ENCODE measurements at regions of chr5 and their contacts with region 1.

Region 1: DNA sequence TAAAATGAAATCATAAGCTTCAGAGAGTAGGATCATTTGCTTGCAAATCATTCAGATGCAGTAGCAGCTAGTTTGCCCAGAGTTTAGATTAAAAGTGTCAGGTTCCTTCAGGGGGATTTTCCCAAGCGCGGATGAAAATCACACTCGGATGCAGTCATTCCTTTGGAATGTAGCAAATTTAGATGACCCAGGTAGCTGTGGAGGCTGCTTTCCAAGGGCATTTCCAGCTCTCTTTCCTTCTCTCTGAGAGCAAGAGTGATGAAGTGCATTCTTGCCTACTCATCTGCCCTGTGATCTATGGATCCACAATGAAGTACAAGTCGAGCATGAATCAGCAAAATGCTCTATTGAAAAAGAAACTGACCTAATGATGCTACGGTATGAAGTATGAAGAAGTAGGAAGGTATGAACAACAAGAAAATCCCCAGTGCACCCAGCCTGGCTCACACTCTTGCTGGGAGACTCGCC is 200.2 kb downstream of the PLK2 start:
- DNase-seq: peak; percentile 85 to 100
- H3K4me3 ChIP-seq: peak overlapping the region; percentile 44; the same call in 1 of the 2 replicates
- H3K27ac ChIP-seq: peak overlapping the region; percentile 98
- H3K4me1 ChIP-seq: peaks cover 42% of the 10 kb centered on the region
- H3K27me3 ChIP-seq: no peaks in the 10 kb centered on the region
- CTCF ChIP-seq: no peak

Region 2: DNA sequence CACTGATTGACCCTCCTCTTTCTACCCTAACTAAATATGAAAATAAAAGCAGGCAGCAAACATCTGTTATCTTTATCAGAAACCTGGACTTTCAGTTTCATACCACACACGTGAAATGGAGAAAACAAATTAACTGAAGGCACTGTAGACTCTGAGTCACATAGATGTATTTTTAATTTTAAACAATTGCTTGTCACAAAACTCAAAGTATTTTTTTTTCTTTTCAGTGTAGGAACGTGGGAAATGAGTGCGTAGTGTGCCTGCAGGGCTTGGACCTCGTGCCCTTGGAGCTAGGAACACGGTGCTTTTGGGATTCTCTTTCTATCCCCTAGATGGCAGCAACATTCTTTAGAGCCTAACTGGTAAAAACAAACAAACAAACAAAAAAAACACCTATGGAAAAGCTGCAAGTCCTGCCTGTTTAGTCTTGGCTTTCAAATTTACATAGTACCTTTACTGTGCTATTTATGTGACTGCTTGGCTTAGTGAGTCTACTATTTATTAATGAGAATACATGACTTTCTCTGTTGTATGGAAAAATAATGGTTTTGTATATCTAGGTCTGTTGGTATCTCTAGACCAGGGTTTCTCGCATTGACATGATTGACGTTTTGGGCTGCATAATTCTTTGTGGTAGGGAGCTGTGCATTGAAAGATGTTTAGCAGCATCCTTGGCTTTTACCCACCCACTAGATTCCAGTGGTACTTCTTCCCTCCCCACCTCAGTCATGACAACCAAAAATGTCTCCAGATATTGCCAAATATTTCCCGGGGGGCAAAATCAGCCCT is 760.3 kb before region 1 on chr5:
- CTCF ChIA-PET with region 1: interaction called, 4 read pairs
- POLR2A ChIA-PET with region 1: interaction called, 5 read pairs
- intact Hi-C with region 1: loop called (anchors 5 kb)
- DNase-seq: peak; percentile 50 to 84
- H3K4me3 ChIP-seq: peak overlapping the region; percentile 18; the same call in 1 of the 2 replicates
- H3K27ac ChIP-seq: peak overlapping the region; percentile 74
- H3K4me1 ChIP-seq: peaks cover 34% of the 10 kb centered on the region
- H3K27me3 ChIP-seq: no peaks in the 10 kb centered on the region
- CTCF ChIP-seq: peak; percentile 84

Region 3: DNA sequence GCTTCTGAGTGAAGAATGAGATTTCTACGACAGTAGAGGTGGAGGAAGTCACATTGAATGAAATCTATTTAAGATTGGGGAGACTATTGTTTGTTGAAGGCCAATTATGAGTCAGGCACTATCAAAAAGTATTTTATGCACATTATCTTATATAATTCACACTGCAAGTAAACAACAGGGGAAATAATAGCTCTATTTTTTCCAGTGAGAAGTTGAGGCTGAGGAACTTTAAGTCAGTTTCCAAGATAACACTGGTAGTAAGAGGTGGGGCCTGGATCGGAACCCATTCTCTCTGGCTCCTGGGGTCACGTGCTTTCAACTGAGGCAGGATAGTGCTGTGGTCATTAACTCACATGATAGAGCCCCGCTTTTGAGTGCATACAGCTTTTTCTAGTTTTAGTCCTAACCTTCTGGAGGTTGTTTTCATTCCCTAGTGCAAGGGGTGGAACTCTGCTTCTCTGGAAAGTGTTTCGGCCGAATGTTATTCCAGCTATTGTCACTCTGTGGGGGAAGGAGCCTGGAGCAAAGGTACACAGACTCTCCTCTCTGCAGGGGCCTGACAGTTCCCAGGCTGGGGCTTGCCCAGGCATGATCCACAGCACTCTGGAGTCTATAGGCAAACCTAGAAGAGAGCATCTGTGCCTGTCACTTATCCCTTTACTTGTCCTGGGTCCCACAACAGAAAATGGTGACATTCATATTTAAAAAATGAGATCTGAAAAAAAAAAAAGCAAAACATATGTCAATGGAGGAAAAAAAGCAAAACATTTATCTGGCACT is 424.7 kb before region 1 on chr5:
- CTCF ChIA-PET with region 1: no interaction called
- POLR2A ChIA-PET with region 1: interaction called, 4 read pairs
- intact Hi-C with region 1: loop called (anchors 2 kb)
- DNase-seq: no peak
- H3K4me3 ChIP-seq: no peak overlapping the region
- H3K27ac ChIP-seq: no peak overlapping the region
- H3K4me1 ChIP-seq: peaks cover 30% of the 10 kb centered on the region
- H3K27me3 ChIP-seq: no peaks in the 10 kb centered on the region
- CTCF ChIP-seq: no peak

Region 4: DNA sequence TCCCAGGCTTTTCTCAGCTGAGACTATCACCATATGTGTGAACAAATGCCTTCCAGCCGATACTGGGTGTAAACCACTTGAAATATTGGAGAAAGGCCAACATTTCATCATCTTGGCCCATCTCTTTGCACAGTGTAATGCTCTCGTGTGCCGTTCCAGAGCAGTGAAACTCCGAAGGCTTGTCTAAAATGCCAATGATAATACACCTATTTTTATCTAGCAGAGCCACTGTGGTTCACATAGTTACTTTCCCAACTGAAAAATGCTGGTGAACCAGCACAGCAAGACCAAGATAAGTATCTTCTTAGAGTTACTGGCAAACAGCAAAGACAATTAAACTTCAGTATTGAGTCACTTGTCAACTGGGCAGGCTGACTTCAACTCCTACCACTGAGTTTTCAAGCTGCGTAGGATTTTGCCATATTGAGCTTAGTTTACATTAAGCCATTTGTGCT is 397.2 kb before region 1 on chr5:
- CTCF ChIA-PET with region 1: no interaction called
- POLR2A ChIA-PET with region 1: no interaction called
- intact Hi-C with region 1: loop called (anchors 1 kb)
- DNase-seq: peak; percentile 69 to 97
- H3K4me3 ChIP-seq: no peak overlapping the region
- H3K27ac ChIP-seq: peak overlapping the region; percentile 99
- H3K4me1 ChIP-seq: peaks cover 31% of the 10 kb centered on the region
- H3K27me3 ChIP-seq: no peaks in the 10 kb centered on the region
- CTCF ChIP-seq: no peak

Region 5: DNA sequence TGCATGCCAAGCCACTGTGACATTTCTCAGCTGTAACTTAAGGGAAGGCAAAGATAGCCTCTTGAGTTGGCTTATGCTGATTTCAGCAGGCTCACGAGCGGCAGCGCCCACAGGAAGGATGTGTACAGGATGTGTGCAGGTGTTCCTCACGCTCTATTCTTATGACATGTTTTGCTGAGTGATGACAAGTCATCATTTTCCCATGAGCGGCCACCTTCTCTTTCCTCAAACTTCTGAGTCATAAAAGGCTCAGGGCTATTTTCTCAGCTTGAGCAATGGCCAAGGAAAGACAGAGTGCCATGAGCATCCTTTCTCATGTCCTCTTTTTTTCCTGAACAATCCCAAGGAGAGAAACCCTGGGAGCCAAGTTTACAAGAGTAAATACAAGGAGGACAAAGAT is 165.7 kb before region 1 on chr5:
- CTCF ChIA-PET with region 1: no interaction called
- POLR2A ChIA-PET with region 1: no interaction called
- intact Hi-C with region 1: loop called (anchors 1 kb)
- DNase-seq: peak; percentile 72 to 96
- H3K4me3 ChIP-seq: no peak overlapping the region
- H3K27ac ChIP-seq: peak overlapping the region; percentile 92
- H3K4me1 ChIP-seq: peaks cover 25% of the 10 kb centered on the region
- H3K27me3 ChIP-seq: no peaks in the 10 kb centered on the region
- CTCF ChIP-seq: no peak

Region 6: GRCh38 chr5:58322453-58322852 is 62.7 kb after region 1 on chr5:
- CTCF ChIA-PET with region 1: no interaction called
- POLR2A ChIA-PET with region 1: interaction called, 10 read pairs
- intact Hi-C with region 1: no loop called
- DNase-seq: no peak
- H3K4me3 ChIP-seq: no peak overlapping the region
- H3K27ac ChIP-seq: no peak overlapping the region
- H3K4me1 ChIP-seq: no peaks in the 10 kb centered on the region
- H3K27me3 ChIP-seq: no peaks in the 10 kb centered on the region
- CTCF ChIP-seq: no peak

Region 7: GRCh38 chr5:58452566-58453258 is 193.0 kb after region 1 on chr5:
- CTCF ChIA-PET with region 1: no interaction called
- POLR2A ChIA-PET with region 1: interaction called, 6 read pairs
- intact Hi-C with region 1: loop called (anchors 1 kb)
- DNase-seq: peak; percentile 64 to 88
- H3K4me3 ChIP-seq: peak overlapping the region; percentile 90; the same call in 1 of the 2 replicates
- H3K27ac ChIP-seq: peak overlapping the region; percentile 96
- H3K4me1 ChIP-seq: peaks cover 38% of the 10 kb centered on the region
- H3K27me3 ChIP-seq: no peaks in the 10 kb centered on the region
- CTCF ChIP-seq: no peak

Measured in PC-9 (cell line).